WTC11 (cell line): ENCODE measurements at regions of chr10 and their contacts with region 1.

Region 1: DNA sequence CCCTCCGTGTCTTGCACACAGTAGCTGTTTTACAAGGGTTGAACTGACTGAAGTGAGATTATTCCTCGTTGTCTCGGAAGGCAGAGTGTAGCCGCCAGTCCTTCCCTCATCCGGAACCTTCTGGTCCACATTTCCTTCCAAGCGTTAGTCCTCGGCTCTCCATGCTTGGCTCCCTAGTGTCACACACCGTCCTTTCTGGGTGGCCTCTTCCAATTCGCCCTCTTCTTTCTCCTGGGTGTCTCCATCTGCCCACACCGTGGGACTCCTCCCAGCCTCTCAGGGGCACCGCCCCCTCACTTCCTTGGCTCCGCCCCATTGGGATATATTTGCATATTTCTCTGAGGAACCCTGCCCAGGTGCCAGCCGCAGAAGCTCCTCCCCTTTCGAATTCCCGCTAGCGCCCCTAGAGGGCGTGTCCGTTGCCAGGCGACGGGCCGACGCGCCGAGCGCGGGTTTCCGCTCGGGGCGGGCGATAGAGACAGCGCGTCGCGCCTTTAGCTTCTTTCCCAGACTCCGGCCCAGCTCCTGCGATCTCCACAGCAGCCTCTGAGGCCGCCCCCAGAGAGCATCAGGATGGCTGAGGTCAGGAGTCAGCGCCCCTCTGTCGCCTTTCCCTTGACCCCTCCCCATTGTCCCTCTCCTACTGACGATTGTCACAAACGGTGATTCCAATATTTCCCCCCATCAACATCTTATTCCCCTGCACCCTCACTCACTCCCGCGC is at the start of gene CFAP58:
- DNase-seq: peak; percentile 98
- ATAC-seq: peak; percentile 96
- H3K4me3 Mint-ChIP-seq: no peak within 1 kb of the TSS
- H3K27ac Mint-ChIP-seq: no peak within 1 kb of the TSS
- H3K4me1 Mint-ChIP-seq: peaks cover 9% of the 10 kb centered on the region
- H3K27me3 Mint-ChIP-seq: peaks cover 10% of the 10 kb centered on the region
- CTCF ChIP-seq: peak; percentile 73
- total RNA-seq, gene CFAP58: 0.92 to 1.1 TPM (median 1.0 TPM) in 3 replicates

Region 2: GRCh38 chr10:104218751-104219150 is 134.7 kb before region 1 on chr10:
- CTCF ChIA-PET with region 1: no interaction called
- POLR2A ChIA-PET with region 1: no interaction called
- DNase-seq: no peak
- ATAC-seq: no peak
- H3K4me3 Mint-ChIP-seq: no peak overlapping the region
- H3K27ac Mint-ChIP-seq: no peak overlapping the region
- H3K4me1 Mint-ChIP-seq: no peaks in the 10 kb centered on the region
- H3K27me3 Mint-ChIP-seq: peaks cover 9% of the 10 kb centered on the region
- CTCF ChIP-seq: no peak

Region 3: DNA sequence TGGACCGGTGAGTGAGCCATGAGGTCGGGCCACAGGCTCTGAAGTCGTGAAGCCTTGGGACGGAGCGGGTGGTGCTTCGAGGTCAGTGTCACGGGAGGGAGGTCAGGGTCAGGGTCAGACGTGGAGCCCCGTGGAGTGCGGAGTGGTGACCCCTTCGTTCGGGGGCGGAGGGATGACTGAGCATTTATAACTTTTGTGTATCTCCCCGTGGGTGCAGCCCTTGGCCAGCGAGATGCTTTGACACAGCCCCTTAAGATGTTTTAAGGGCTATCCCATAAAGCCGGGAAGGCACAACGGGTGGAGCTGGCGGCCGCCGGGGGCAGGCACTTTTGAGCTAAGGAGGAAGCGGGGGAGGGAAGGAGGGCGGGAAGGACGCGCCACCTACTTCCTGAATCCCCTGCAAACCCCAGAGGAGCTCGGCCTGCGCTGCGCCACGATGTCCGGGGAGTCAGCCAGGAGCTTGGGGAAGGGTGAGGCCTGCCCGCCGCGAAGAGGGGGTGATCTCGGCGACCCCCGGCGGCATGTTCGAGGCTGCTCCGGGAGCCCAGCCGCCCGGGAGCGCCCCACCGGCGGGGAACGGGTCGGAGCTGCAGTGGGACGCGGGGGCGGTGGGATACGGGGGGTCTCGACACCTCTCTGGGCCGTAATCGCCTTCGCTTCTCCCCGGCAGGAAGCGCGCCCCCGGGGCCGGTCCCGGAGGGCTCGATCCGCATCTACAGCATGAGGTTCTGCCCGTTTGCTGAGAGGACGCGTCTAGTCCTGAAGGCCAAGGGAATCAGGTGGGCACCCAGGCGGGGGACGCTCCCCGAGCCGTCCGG is 98.8 kb before region 1 on chr10 and contains the start of gene GSTO1:
- CTCF ChIA-PET with region 1: interaction called, 15 read pairs
- POLR2A ChIA-PET with region 1: no interaction called
- DNase-seq: peak; percentile 65
- ATAC-seq: peak; percentile 74
- H3K4me3 Mint-ChIP-seq: peak within 1 kb of the TSS; percentile 81
- H3K27ac Mint-ChIP-seq: peak within 1 kb of the TSS; percentile 87
- H3K4me1 Mint-ChIP-seq: peaks cover 60% of the 10 kb centered on the region
- H3K27me3 Mint-ChIP-seq: peaks cover 13% of the 10 kb centered on the region
- CTCF ChIP-seq: no peak
- total RNA-seq, gene GSTO1: 87.9 to 99.5 TPM (median 99.2 TPM) in 3 replicates

Region 4: DNA sequence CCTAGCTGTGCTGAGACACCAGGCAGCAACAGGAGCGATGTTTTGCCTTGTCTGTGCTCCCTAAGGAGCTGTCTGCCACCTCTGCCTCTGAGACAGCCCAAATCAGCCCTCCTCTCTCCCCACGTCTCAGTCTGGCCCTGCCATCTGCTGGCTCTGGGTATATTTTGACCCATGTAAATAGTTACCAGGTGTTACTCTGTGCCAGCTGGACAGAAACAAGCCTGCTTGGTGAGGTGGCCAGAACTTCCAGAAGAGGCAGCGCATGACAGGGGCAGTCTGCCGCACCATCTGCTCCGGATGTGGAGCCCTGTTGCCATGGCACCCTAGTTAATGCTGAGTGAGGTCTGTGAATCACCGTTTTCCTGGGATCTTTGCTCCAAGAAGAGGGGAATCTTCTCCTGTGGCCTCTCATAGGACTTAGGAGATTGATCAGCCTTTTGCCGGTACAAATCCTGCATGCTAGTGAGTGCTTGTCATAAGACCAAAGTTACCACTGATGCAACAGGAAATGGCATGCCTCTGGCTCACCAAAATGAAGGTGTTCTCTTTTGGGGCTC is 52.7 kb before region 1 on chr10:
- CTCF ChIA-PET with region 1: interaction called, 55 read pairs
- POLR2A ChIA-PET with region 1: interaction called, 5 read pairs
- DNase-seq: no peak
- ATAC-seq: no peak
- H3K4me3 Mint-ChIP-seq: no peak overlapping the region
- H3K27ac Mint-ChIP-seq: no peak overlapping the region
- H3K4me1 Mint-ChIP-seq: peaks cover 15% of the 10 kb centered on the region
- H3K27me3 Mint-ChIP-seq: peaks cover 3% of the 10 kb centered on the region; the same call in 1 of the 2 replicates
- CTCF ChIP-seq: no peak

Region 5: GRCh38 chr10:104314591-104315485 is 38.6 kb before region 1 on chr10:
- CTCF ChIA-PET with region 1: interaction called, 11 read pairs
- POLR2A ChIA-PET with region 1: interaction called, 3 read pairs
- DNase-seq: no peak
- ATAC-seq: no peak
- H3K4me3 Mint-ChIP-seq: no peak overlapping the region
- H3K27ac Mint-ChIP-seq: no peak overlapping the region
- H3K4me1 Mint-ChIP-seq: peaks cover 36% of the 10 kb centered on the region
- H3K27me3 Mint-ChIP-seq: no peaks in the 10 kb centered on the region
- CTCF ChIP-seq: no peak

Region 6: DNA sequence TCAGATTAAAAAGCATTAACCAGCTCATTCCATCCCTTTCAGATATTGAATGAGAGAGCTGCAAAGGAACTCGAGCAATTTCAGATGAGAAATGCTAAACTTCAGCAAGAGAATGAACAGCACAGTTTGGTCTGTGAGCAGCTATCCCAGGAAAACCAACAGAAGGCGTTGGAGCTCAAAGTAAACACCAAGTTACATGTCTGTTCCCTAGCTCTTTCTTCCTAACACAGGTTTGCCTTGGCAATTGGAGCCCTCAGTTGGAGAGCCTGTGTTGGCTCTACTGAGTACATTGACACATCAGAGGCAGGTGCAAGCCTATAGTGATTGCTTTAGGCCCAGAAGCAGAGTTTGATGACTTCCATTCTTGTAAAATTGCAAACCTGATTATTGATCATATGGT is 14.9 kb after region 1 on chr10:
- CTCF ChIA-PET with region 1: interaction called, 21 read pairs
- POLR2A ChIA-PET with region 1: no interaction called
- DNase-seq: no peak
- ATAC-seq: no peak; the same call in 1 of the 2 replicates
- H3K4me3 Mint-ChIP-seq: no peak overlapping the region
- H3K27ac Mint-ChIP-seq: no peak overlapping the region
- H3K4me1 Mint-ChIP-seq: peaks cover 14% of the 10 kb centered on the region
- H3K27me3 Mint-ChIP-seq: no peaks in the 10 kb centered on the region
- CTCF ChIP-seq: no peak

Region 7: GRCh38 chr10:104540181-104540580 is 186.7 kb after region 1 on chr10:
- CTCF ChIA-PET with region 1: no interaction called
- POLR2A ChIA-PET with region 1: no interaction called
- DNase-seq: no peak
- ATAC-seq: no peak
- H3K4me3 Mint-ChIP-seq: no peak overlapping the region
- H3K27ac Mint-ChIP-seq: no peak overlapping the region
- H3K4me1 Mint-ChIP-seq: no peaks in the 10 kb centered on the region
- H3K27me3 Mint-ChIP-seq: no peaks in the 10 kb centered on the region
- CTCF ChIP-seq: no peak

Region 8: GRCh38 chr10:104622598-104623209 is 269.2 kb after region 1 on chr10:
- CTCF ChIA-PET with region 1: interaction called, 26 read pairs
- POLR2A ChIA-PET with region 1: no interaction called
- DNase-seq: peak; percentile 68
- ATAC-seq: peak; percentile 99
- H3K4me3 Mint-ChIP-seq: no peak overlapping the region
- H3K27ac Mint-ChIP-seq: no peak overlapping the region
- H3K4me1 Mint-ChIP-seq: no peaks in the 10 kb centered on the region
- H3K27me3 Mint-ChIP-seq: peaks cover 2% of the 10 kb centered on the region
- CTCF ChIP-seq: peak; percentile 56